WTC11 (cell line): ENCODE measurements at regions of chr4 and their contacts with region 1.

Region 1: GRCh38 chr4:70687821-70688794 is at the start of gene UTP3:
- DNase-seq: peak; percentile 95
- ATAC-seq: peak; percentile 95
- H3K4me3 Mint-ChIP-seq: peak within 1 kb of the TSS; percentile 94
- H3K27ac Mint-ChIP-seq: peak within 1 kb of the TSS; percentile 92
- H3K4me1 Mint-ChIP-seq: peaks cover 26% of the 10 kb centered on the region
- H3K27me3 Mint-ChIP-seq: no peaks in the 10 kb centered on the region
- CTCF ChIP-seq: peak; percentile 83
- total RNA-seq, gene UTP3: 39.1 to 45.5 TPM (median 39.5 TPM) in 3 replicates

Region 2: GRCh38 chr4:70564033-70564432 is 124.1 kb before region 1 on chr4:
- CTCF ChIA-PET with region 1: no interaction called
- POLR2A ChIA-PET with region 1: no interaction called
- DNase-seq: no peak
- ATAC-seq: no peak
- H3K4me3 Mint-ChIP-seq: no peak overlapping the region
- H3K27ac Mint-ChIP-seq: no peak overlapping the region
- H3K4me1 Mint-ChIP-seq: peaks cover 8% of the 10 kb centered on the region
- H3K27me3 Mint-ChIP-seq: no peaks in the 10 kb centered on the region; the same call in 1 of the 2 replicates
- CTCF ChIP-seq: no peak

Region 3: DNA sequence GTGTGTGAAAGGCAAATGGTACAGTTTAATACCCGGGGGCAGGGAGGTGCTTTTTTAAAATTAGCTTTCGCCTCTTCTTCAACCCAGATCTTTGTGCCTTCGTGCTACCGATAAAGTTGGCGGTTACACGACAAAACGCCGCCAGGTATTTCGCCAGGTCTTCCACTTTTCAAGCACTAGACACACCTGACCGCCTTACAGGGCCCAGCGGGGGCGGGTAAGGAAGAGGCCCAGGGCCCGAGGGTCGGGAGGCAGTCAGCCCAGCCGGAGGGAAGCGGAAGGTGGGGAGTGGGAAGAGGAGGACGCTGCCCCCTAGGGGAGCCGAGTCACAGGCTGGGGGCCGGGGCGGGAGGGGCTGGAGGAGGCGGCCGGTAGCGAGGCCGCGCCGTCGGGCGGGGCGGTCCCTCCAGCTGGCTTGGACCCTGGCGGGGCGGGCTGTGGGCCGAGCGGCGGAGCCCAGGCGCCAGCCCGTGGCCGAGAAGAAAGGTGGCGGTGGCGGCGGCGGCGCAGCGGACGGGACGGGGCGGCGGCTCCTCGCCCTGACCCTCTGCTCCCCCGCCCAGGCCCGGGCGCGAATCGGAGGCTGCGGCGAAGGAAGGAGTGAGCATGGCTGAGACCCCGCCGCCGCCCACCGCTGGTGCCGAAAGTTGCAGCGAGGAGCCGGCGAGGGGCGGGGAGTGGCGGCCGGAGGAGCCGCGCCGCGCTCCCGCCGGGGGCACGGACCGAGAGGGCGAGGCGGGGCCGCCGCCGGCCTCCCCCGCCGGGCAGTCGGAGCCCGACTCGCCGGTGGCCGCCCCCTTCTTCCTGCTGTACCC is 16.4 kb after region 1 on chr4:
- CTCF ChIA-PET with region 1: interaction called, 10 read pairs
- POLR2A ChIA-PET with region 1: interaction called, 8 read pairs
- DNase-seq: peak; percentile 92
- ATAC-seq: peak; percentile 87
- H3K4me3 Mint-ChIP-seq: peak overlapping the region; percentile 88
- H3K27ac Mint-ChIP-seq: peak overlapping the region; percentile 98
- H3K4me1 Mint-ChIP-seq: peaks cover 18% of the 10 kb centered on the region
- H3K27me3 Mint-ChIP-seq: peaks cover 3% of the 10 kb centered on the region; the same call in 1 of the 2 replicates
- CTCF ChIP-seq: no peak